Transverse colon (tissue), 4 donors: ENCODE measurements at regions of chr1 and their contacts with region 1.

Region 1: GRCh38 chr1:212062832-212063438 is 27.4 kb downstream of the DTL start:
- DNase-seq: no peak
- H3K4me3 ChIP-seq: no peak overlapping the region
- H3K27ac ChIP-seq: no peak overlapping the region
- H3K4me1 ChIP-seq: no peaks in the 10 kb centered on the region
- H3K27me3 ChIP-seq: no peaks in the 10 kb centered on the region
- CTCF ChIP-seq: peak; percentile 56 to 68 (median 63)
- EP300 ChIP-seq: no peak
- POLR2A ChIP-seq: no peak

Region 2: DNA sequence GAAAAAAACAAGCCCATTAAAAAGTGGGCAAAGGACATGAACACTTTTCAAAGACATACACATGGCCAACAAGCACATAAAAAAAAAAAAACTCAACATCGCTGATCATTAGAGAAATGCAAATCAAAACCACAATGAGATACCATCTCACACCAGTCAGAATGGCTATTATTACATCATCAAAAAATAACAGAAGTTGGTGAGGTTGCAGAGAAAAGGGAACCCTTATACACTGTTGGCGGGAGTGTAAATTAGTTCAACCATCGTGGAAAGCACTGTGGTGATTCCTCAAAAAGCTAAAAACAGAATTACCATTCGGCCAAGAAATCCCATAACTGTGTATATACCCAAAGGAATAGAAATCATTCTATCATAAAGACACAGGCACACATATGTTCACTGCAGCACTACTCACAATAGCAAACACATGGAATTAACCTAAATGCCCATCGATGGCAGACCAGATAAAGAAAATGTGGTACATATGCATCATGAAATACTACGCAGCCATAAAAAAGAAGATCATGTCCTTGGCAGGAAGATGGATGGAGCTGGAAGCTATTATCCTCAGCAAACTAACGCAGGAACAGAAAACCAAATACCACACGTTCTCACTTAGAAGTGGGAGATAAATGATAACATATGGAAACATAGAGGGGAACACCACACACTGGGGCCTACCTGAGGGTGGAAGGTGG is 97.7 kb before region 1 on chr1:
- in situ Hi-C with region 1: no loop called
- intact Hi-C with region 1: no loop called
- DNase-seq: no peak
- H3K4me3 ChIP-seq: no peak overlapping the region
- H3K27ac ChIP-seq: no peak overlapping the region
- H3K4me1 ChIP-seq: no peaks in the 10 kb centered on the region
- H3K27me3 ChIP-seq: no peaks in the 10 kb centered on the region
- CTCF ChIP-seq: no peak
- EP300 ChIP-seq: no peak
- POLR2A ChIP-seq: no peak

Region 3: DNA sequence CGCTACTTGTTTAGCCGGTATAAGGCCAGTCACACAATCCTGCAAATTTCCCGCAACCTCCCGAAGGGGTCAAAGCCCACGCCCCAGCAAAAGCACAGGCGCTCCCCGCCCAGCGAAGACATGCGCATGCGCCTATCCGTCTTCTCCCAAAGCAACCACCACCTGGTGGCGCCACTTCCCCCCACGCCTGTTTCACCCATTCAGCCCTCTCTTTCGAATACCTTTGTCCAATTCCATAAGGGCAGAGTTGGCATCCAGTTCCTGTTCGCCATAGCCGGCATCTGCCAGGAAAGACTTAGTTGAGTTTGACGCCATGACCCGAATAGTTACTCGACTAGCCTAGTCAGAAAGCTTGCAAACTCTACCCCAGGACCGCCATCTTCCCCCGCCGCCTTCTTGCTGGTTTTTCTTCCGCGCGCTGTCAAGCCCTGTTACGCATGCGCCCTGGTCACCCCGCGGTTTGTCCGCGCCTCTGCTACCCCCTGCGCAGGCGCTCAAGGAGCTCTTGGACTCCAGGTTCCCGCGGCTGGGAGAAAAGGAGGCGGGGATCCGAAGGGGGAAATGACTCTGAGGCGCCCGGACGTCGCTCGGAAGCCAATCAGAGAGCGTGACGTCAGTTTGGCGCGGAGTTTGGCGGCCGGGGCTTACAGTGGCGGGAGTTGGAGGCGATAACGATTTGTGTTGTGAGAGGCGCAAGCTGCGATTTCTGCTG is 27.7 kb before region 1 on chr1 and contains the starts of genes DTL and INTS7:
- in situ Hi-C with region 1: no loop called
- intact Hi-C with region 1: no loop called
- DNase-seq: peak; percentile 99
- H3K4me3 ChIP-seq: peak within 1 kb of the TSS; percentile 45 to 70 (median 60)
- H3K27ac ChIP-seq: peak within 1 kb of the TSS; percentile 87 to 95 (median 89)
- H3K4me1 ChIP-seq: peaks cover 8 to 26% (median 16%) of the 10 kb centered on the region in 4 donors
- H3K27me3 ChIP-seq: no peaks in the 10 kb centered on the region
- CTCF ChIP-seq: peak; percentile 82 to 99 (median 92)
- EP300 ChIP-seq: no peak
- POLR2A ChIP-seq: peak; percentile 44
- total RNA-seq, gene DTL: 0.16 to 5.0 (median 3.3) TPM in 3 of 4 donors, not detected in the other
- total RNA-seq, gene INTS7: 7.1 to 10.0 (median 9.5) TPM

Region 4: GRCh38 chr1:212124690-212125582 is 62.0 kb after region 1 on chr1:
- in situ Hi-C with region 1: no loop called
- intact Hi-C with region 1: no loop called
- DNase-seq: peak; percentile 68
- H3K4me3 ChIP-seq: no peak overlapping the region
- H3K27ac ChIP-seq: peak overlapping the region; percentile 54 to 74 (median 66)
- H3K4me1 ChIP-seq: peaks cover 0 to 17% (median 7%) of the 10 kb centered on the region in 4 donors
- H3K27me3 ChIP-seq: no peaks in the 10 kb centered on the region
- CTCF ChIP-seq: no peak
- EP300 ChIP-seq: no peak
- POLR2A ChIP-seq: no peak

Region 5: DNA sequence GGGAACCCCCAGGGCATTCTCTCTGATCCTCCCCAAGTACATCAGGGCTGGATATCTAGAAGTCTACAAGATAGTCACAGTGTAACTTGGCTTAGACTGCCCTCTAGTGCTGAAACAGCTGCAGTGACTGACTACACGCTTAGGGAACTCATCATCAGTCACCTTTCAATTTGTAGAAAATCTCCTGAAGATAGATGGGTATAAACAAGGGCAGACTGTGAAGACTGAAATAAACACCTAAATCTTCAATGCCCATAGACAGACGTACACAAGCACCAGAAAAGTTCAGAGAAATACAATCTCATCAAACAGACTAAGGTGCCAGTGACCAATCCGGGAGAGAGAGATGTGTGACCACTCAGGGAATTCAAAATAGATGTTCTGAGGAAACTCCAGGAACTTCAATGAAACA is 305.1 kb after region 1 on chr1:
- in situ Hi-C with region 1: loop called in 3 of 4 experiments (anchors 10 to 25 kb)
- intact Hi-C with region 1: no loop called
- DNase-seq: peak; percentile 50
- H3K4me3 ChIP-seq: no peak overlapping the region
- H3K27ac ChIP-seq: no peak overlapping the region
- H3K4me1 ChIP-seq: no peaks in the 10 kb centered on the region
- H3K27me3 ChIP-seq: no peaks in the 10 kb centered on the region
- CTCF ChIP-seq: peak; percentile 76 to 81 (median 79)
- EP300 ChIP-seq: no peak
- POLR2A ChIP-seq: no peak

Region 6: DNA sequence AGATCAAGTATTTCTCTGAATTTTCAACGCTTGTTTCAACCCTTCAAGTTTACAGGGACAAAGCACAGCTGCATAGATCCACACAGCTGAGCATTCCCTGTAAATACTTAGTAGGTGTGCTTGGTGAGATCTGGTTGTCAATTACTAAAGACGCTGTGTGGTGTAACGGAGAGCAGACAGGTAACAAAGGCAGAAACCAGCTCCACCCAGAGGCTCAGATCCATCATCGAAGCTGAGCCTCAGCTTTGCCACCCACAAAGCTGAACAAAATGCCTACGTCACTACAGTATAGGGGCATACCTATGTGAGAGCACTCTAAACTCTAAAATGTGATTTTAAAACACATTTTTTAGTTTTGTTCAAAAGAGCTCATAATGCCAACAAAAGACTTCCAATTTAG is 313.1 kb after region 1 on chr1:
- in situ Hi-C with region 1: loop called in 3 of 4 experiments (anchors 10 to 25 kb)
- intact Hi-C with region 1: no loop called
- DNase-seq: no peak
- H3K4me3 ChIP-seq: no peak overlapping the region
- H3K27ac ChIP-seq: no peak overlapping the region
- H3K4me1 ChIP-seq: no peaks in the 10 kb centered on the region
- H3K27me3 ChIP-seq: no peaks in the 10 kb centered on the region
- CTCF ChIP-seq: no peak
- EP300 ChIP-seq: no peak
- POLR2A ChIP-seq: no peak